ENCODE measurements at regions of chr21 and their contacts with region 1.

Region 1: GRCh38 chr21:28604946-28605537 is 387.6 kb downstream of the LTN1 start:
- DNase-seq: peak in 7 of 9 donors; percentile 18 to 69 (median 64)
- ATAC-seq: peak; percentile 96
- H3K4me3 ChIP-seq: no peak overlapping the region
- H3K4me3 Mint-ChIP-seq: peak overlapping the region; percentile 35 to 79 (median 68)
- H3K27ac ChIP-seq: no peak overlapping the region
- H3K27ac Mint-ChIP-seq: peak overlapping the region in 7 of 9 donors; percentile 0 to 73 (median 51)
- H3K4me1 ChIP-seq: peaks cover 14 to 15% of the 10 kb centered on the region in 2 donors
- H3K4me1 Mint-ChIP-seq: peaks cover 14 to 45% (median 31%) of the 10 kb centered on the region in 7 donors
- H3K27me3 ChIP-seq: no peaks in the 10 kb centered on the region
- H3K27me3 Mint-ChIP-seq: no peaks in the 10 kb centered on the region

Region 2: DNA sequence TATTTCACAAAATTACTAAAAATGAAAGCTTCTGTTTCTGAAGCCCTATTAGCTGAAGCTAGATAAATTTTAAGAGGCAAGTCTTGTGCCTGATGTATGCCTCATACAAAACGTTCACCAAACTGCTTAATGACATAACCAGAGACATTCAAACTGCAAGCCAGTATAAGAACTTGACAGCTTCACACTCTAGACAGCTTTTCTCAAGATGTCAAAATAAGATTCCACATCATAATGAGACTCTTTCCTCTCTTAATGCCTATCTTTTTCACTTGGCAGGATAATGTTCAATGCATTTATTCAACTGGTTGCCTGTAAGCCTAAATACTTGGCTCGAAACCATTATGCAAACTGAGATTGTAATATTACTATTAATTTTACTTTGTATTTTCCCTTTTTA is 36.4 kb before region 1 on chr21:
- CTCF ChIA-PET with region 1: no interaction called
- POLR2A ChIA-PET with region 1: no interaction called
- intact Hi-C with region 1: loop called in 1 of 2 experiments (anchors 5 kb)
- DNase-seq: no peak
- ATAC-seq: no peak
- H3K4me3 ChIP-seq: no peak overlapping the region
- H3K4me3 Mint-ChIP-seq: no peak overlapping the region
- H3K27ac ChIP-seq: no peak overlapping the region
- H3K27ac Mint-ChIP-seq: no peak overlapping the region
- H3K4me1 ChIP-seq: no peaks in the 10 kb centered on the region
- H3K4me1 Mint-ChIP-seq: peaks cover 0 to under 1% (median 0%) of the 10 kb centered on the region in 7 donors
- H3K27me3 ChIP-seq: no peaks in the 10 kb centered on the region
- H3K27me3 Mint-ChIP-seq: no peaks in the 10 kb centered on the region

Measured in naive thymus-derived CD4-positive, alpha-beta T cell (primary cell).